ENCODE measurements at regions of chr11 and their contacts with region 1.

Region 1: GRCh38 chr11:17598700-17599459 is 51.8 kb downstream of the OTOG start:
- DNase-seq: peak; percentile 81 to 89 (median 82)
- H3K4me3 ChIP-seq: no peak overlapping the region
- H3K27ac ChIP-seq: no peak overlapping the region
- H3K4me1 ChIP-seq: no peaks in the 10 kb centered on the region
- H3K27me3 ChIP-seq: no peaks in the 10 kb centered on the region
- CTCF ChIP-seq: peak; percentile 96

Region 2: GRCh38 chr11:17722000-17722643 is 123.2 kb after region 1 on chr11:
- intact Hi-C with region 1: loop called (anchors 10 kb)
- DNase-seq: no peak
- H3K4me3 ChIP-seq: no peak overlapping the region
- H3K27ac ChIP-seq: no peak overlapping the region
- H3K4me1 ChIP-seq: peaks cover 0 to 17% (median 0%) of the 10 kb centered on the region in 3 donors
- H3K27me3 ChIP-seq: peaks cover 41% of the 10 kb centered on the region
- CTCF ChIP-seq: no peak

Region 3: DNA sequence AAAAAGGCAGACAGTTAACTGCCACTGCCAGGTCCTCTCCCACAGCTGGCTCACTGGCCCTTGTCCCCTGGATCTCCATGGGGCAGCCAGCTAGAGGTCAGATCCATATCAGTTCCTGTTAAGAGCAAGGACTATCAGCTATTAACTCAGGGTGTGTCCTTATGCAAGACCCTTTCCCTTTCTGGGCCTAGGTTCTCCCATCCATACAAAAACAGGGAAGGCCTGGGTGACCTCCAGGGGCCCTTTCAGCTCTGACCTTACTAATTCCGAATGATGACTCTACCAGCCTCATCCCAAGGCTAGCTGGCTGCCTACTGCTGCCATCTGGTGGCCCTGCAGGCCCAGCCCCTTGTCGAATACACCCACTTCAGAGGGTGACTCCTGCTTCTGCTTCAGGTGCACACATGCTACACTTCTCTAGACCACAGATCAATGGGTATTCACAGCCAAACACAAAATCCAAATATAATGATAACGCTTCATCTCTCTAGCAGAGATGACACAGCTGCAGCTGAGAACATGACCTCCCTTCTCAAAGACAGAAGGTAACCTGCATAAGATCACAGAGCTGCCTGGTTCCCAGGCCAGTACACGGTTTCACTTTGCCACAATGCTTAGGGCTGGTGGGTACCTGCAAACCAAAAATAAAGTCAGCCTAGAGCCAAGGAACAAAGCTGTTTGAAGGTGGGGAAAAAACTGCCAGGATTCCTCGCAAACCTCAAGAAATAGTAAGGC is 379.8 kb after region 1 on chr11:
- intact Hi-C with region 1: loop called (anchors 10 kb)
- DNase-seq: peak in 4 of 5 donors; percentile 31 to 56 (median 44)
- H3K4me3 ChIP-seq: no peak overlapping the region
- H3K27ac ChIP-seq: no peak overlapping the region
- H3K4me1 ChIP-seq: no peaks in the 10 kb centered on the region
- H3K27me3 ChIP-seq: no peaks in the 10 kb centered on the region
- CTCF ChIP-seq: peak; percentile 70

Measured in kidney (tissue), 22 donors.